ENCODE measurements at regions of chr1 and their contacts with region 1.

Region 1: DNA sequence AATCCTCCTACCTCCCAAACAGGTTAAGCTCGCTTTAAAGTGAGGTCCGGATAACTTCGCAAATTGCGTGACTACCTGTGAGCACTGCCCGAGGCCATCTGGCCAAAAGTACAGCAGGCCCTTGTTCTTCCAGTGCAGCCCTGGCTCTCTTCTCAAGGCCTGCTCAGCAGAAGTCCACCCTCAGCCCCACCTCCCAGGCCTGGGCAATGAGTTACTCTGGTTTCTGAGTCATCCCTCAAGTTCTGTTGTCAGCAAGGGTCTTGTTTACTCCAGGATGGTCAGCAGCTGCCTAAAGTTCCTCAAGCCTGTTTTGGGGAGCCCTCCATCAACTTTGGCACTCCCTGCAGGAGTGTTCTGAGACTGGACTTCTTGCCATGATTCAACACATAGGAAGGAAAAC is 101.7 kb downstream of the BCAR3 start:
- DNase-seq: peak in 1 of 2 donors; percentile 34
- ATAC-seq: peak in 6 of 8 donors; percentile 12 to 55 (median 30)
- H3K4me3 ChIP-seq: no peak overlapping the region
- H3K27ac ChIP-seq: peak overlapping the region in 8 of 10 donors; percentile 25 to 63 (median 44)
- H3K4me1 ChIP-seq: peaks cover 7 to 68% (median 46%) of the 10 kb centered on the region in 9 donors
- H3K27me3 ChIP-seq: no peaks in the 10 kb centered on the region
- CTCF ChIP-seq: no peak

Region 2: DNA sequence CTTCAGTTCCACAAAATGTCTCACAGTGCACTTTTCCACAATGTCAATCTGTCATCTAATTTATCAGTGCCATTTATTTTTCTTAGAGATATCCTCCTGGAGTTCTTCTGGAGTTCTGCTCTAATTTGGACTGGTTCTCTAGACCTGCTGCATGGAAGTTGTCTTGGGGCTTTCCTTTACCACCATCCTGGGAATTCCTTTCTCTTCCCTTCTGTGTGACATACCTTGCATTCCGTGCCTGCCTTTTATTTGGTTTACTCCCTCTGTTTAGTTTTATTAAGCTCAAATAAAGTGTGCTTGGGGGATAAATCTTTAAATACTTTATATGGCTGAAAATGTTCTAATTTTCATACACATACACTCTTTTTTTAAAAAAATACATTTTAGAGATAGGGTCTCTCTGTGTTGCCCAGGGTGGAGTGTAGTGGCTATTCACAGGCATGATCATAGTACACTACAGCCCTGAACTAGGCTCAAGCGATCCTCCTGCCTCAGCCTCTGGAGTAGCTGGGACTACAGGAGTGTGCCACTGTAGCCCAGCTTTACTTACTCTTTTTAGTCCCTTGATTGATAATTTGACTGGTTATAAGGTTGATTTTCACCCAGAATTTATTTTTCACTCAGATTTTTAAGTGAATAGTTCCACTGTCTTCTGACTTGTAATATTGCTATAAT is 486.4 kb before region 1 on chr1:
- intact Hi-C with region 1: no loop called
- DNase-seq: no peak
- ATAC-seq: no peak
- H3K4me3 ChIP-seq: no peak overlapping the region
- H3K27ac ChIP-seq: no peak overlapping the region
- H3K4me1 ChIP-seq: peaks cover 0 to 11% (median 4%) of the 10 kb centered on the region in 9 donors
- H3K27me3 ChIP-seq: no peaks in the 10 kb centered on the region
- CTCF ChIP-seq: no peak

Region 3: DNA sequence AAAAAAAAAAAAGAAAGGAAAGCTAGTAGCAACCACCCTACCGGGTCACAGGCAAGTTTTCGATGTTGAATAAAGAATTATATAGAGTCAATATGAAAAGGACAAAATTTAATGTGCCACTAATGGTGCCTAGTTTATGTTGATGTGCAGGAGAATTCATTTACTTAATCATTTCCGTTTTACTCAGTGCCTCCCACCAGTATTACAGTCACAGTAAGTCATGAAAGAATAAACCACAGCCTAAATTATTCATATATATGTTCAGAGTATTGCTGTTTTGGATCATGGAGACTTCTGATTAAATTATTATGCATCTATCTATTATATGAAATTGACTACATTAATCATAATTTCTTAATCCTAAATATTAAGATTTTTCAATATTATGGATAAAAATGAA is 96.7 kb before region 1 on chr1:
- intact Hi-C with region 1: no loop called
- DNase-seq: no peak
- ATAC-seq: no peak
- H3K4me3 ChIP-seq: no peak overlapping the region
- H3K27ac ChIP-seq: no peak overlapping the region
- H3K4me1 ChIP-seq: peaks cover 0 to 23% (median 0%) of the 10 kb centered on the region in 9 donors
- H3K27me3 ChIP-seq: no peaks in the 10 kb centered on the region
- CTCF ChIP-seq: no peak

Region 4: DNA sequence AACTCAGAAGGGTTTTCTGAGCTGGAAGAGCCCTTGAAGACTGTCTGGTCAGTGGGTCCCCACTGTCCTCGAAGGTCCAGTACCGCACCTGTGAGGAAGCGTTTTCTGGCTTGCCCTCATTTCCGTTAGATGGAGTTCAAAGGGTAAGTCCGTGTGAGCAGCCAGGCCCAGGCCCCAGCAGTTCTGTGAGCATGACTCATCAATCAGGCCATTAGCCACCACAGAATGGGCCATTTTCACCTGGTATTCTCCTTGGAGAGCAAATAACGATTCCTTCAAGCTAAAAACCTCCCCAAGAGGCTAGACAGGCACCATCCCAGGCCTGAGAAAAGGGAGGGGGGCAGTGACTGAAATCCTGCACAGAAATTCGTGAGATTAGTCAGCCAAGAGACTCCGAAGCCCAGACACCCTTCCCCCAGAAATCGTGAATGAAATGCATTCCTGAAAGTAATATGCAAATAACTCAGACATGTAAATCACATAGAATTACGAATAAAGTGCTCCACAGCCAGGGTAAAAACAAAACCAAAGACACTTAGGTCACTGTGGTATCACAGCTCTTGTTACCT is 35.8 kb after region 1 on chr1:
- intact Hi-C with region 1: loop called in 1 of 10 experiments (anchors 5 kb)
- DNase-seq: no peak
- ATAC-seq: no peak
- H3K4me3 ChIP-seq: no peak overlapping the region
- H3K27ac ChIP-seq: peak overlapping the region in 8 of 10 donors; percentile 55 to 82 (median 74)
- H3K4me1 ChIP-seq: peaks cover 24 to 98% (median 65%) of the 10 kb centered on the region in 9 donors
- H3K27me3 ChIP-seq: no peaks in the 10 kb centered on the region
- CTCF ChIP-seq: no peak